WTC11 (cell line): ENCODE measurements at regions of chr11 and their contacts with region 1.

Region 1: DNA sequence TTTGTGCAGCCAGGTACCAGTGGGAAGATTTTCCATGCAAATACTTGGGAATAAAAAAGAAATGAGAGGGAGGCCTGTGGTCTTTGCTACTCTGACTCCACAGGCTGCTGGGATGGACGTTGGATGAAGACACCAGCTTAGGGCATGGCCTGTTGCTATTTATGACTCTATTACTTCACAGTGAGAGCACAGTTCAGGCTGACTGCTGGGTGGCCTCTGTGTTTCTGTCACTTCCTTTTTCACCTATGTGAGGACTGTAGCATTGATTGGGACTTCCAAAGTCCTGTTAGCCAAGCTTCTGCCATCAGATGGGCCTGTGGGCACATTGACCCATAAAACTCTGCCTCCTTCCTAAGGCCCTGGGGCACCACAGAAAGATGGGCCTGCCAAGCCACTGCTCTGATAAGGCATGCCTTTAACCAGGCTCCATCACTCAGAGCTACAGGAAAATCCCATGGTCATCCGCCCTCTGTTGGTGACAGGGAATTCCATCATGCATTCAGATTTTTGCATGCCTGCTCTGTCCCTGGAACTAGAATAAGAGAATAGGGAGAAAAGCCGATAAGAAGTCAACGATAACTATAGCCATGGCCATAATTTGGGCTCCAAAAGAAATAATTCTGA is 64.6 kb downstream of the KCNJ1 start:
- DNase-seq: peak; percentile 56
- ATAC-seq: peak; percentile 88
- H3K4me3 Mint-ChIP-seq: no peak overlapping the region
- H3K27ac Mint-ChIP-seq: no peak overlapping the region
- H3K4me1 Mint-ChIP-seq: peaks cover 16% of the 10 kb centered on the region
- H3K27me3 Mint-ChIP-seq: peaks cover 3% of the 10 kb centered on the region; the same call in 1 of the 2 replicates
- CTCF ChIP-seq: peak; percentile 38

Region 2: DNA sequence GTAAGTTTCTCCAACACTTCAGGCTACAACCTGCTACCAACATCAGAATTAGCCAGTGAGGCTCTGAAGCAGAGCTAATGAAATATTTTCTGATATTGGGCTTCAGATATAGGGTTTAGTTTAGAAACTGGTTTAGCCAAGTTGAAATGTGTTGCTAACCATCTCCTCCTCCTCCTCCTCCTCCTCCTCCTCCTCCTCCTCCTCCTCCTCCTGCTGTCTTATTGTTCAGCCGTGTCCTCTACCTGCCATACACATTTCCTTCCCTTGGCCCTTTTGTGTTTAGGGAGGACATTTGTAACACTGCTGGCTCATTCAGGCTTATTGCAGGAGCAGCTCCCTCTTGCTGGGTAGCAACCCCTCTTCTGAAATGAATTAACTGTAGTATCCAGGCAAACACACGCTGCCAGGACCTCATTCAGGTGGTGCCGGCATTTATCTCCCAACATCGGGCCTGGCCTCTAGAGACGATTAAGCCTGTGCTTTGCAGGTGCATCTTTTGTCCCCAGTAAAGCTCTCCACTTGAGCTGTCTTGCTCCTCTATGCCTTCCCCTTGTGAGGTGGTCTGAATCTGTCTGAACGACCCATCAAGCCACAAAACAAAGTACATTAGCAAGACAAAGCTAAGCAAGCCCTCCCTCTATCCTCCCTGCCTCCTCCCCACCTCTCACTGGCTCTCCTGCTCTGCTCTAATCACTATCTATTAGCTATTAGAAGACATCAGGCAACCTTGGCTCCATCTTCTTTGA is 18.2 kb before region 1 on chr11:
- CTCF ChIA-PET with region 1: interaction called, 12 read pairs
- POLR2A ChIA-PET with region 1: no interaction called
- DNase-seq: peak; percentile 32
- ATAC-seq: peak; percentile 94
- H3K4me3 Mint-ChIP-seq: peak overlapping the region; percentile 43
- H3K27ac Mint-ChIP-seq: peak overlapping the region; percentile 93
- H3K4me1 Mint-ChIP-seq: peaks cover 49% of the 10 kb centered on the region
- H3K27me3 Mint-ChIP-seq: no peaks in the 10 kb centered on the region; the same call in none of the 2 replicates
- CTCF ChIP-seq: no peak

Region 3: GRCh38 chr11:128841461-128842072 is 39.1 kb after region 1 on chr11:
- CTCF ChIA-PET with region 1: no interaction called
- POLR2A ChIA-PET with region 1: no interaction called
- DNase-seq: no peak
- ATAC-seq: no peak
- H3K4me3 Mint-ChIP-seq: no peak overlapping the region
- H3K27ac Mint-ChIP-seq: no peak overlapping the region
- H3K4me1 Mint-ChIP-seq: peaks cover 31% of the 10 kb centered on the region
- H3K27me3 Mint-ChIP-seq: no peaks in the 10 kb centered on the region; the same call in 1 of the 2 replicates
- CTCF ChIP-seq: no peak